Right lobe of liver (tissue), 6 donors: ENCODE measurements at regions of chr4 and their contacts with region 1.

Region 1: DNA sequence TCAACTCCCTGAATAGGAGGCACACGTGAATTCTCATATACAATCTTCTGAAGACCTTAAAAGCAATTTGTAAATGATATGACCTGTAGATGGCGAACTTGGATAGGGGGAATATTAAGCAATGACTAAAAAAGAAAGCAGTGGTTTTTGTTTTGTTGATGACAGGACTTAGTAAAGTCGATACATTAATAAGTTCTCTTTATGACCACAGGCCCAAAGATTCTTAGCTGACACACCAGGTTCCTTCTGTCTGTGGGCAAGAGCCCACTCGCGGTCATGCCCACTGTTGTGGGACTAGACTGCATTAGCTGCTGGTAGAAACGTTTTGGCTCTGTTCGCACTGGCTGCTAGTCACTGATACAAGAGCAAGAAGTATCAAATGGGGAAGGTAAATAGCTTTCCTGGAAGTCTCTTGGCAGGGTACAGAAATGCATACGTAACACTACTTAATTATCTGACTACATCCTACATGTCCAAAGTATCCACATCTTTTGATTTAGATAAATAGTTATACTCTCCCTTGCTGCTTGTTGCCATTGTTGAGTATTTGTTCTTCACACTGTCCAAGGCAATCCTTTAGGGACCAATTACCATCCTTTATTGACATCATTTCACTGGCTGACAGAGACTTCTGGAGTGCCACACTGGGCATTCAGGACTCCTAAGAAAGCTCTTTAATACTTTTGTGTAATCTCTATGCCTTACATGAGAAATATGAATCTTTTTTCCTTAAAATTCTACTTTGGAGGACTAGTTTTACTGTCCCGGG is 31.0 kb downstream of the ALPK1 start:
- DNase-seq: no peak
- ATAC-seq: peak in 3 of 4 donors; percentile 45 to 55 (median 52)
- H3K4me3 ChIP-seq: no peak overlapping the region
- H3K27ac ChIP-seq: no peak overlapping the region
- H3K4me1 ChIP-seq: no peaks in the 10 kb centered on the region
- H3K27me3 ChIP-seq: no peaks in the 10 kb centered on the region
- CTCF ChIP-seq: peak; percentile 31 to 44 (median 38)
- POLR2A ChIP-seq: no peak

Region 2: DNA sequence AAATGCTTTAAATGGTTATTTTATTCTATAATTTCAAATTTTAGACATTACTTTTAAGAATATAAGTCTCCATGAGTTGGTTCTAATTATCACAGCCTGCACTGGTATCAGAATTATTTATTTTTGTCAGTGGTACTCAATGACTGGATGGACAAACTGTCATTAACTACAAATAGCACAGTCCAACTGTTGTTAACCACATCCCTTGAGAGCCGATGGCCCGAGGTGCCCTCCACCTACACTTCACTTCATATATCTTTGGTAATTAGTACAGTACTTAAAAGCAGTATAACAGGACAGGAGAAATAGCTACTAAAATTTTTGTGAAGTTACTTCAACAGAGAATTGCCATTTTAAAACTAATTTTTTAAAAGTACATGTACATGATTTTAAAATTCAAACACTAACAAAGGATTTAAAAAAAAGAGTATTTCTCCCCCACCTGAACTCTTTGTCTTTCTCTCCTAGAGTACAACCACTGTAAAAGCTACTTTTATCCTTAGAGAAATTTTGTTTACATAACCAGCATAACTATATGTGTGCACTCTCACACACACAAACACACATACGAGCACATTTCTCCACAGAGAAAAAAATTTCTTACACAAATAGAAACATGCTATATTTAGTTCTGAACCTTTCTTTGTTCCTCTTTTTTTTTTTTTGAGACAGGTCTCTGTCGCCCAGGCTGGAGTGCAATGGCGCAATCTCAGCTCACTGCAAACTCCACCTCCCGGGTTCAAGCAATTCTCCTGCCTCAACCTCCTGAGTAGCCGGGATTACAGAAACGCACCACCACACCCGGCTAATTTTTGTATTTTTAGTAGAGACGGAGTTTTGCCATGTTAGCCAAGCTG is 48.9 kb before region 1 on chr4:
- intact Hi-C with region 1: no loop called
- DNase-seq: no peak
- ATAC-seq: peak in 2 of 4 donors; percentile 38 to 45
- H3K4me3 ChIP-seq: no peak overlapping the region
- H3K27ac ChIP-seq: no peak overlapping the region
- H3K4me1 ChIP-seq: peaks cover 0 to 22% (median 0%) of the 10 kb centered on the region in 4 donors
- H3K27me3 ChIP-seq: no peaks in the 10 kb centered on the region
- CTCF ChIP-seq: no peak
- POLR2A ChIP-seq: no peak

Region 3: DNA sequence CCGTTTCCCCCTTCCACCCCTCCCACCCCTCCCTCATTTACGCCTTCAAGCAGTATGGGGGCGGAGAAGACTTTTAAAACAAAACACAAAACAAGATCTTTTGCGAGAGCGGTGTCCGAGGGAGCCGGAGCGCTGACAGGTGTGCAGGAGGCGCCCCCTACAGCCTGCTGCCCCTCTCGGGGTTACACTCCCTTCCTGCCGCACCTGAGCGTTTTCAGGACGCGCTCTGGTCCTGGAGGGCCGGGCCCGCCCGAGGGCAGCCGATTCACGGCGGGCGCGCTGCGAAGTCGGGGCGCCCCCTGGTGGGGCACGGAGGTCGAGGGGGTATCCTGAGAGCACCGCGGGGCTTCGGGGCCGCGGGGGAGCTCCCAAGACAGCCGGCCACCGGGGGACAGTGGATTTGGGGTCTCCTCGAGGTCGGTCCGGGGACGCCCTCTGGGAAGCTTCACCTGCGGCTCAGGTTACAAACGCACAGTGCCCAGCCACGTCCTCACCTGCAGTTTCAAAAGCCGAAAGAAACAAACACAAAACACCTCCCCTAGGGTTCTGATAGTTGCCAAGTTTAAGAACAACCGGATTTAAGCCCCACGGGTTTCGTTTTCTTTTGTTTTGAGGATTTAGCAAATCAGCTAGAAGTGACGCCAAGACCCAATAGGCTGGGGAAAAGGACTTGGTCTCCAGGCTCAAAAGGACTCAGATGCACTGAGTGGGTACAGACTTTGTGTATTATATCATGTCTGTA is 195.8 kb after region 1 on chr4:
- intact Hi-C with region 1: loop called in 1 of 2 experiments (anchors 10 kb)
- DNase-seq: peak in 2 of 3 donors; percentile 65
- ATAC-seq: peak; percentile 87 to 95 (median 92)
- H3K4me3 ChIP-seq: peak overlapping the region; percentile 5 to 35 (median 7)
- H3K27ac ChIP-seq: no peak overlapping the region
- H3K4me1 ChIP-seq: peaks cover 0 to 22% (median 0%) of the 10 kb centered on the region in 4 donors
- H3K27me3 ChIP-seq: peaks cover 22 to 34% of the 10 kb centered on the region in 2 donors
- CTCF ChIP-seq: peak; percentile 45 to 74 (median 68)
- POLR2A ChIP-seq: no peak